ENCODE measurements at regions of chr18 and their contacts with region 1.

Region 1: GRCh38 chr18:45910405-45911023 is 56.6 kb downstream of the EPG5 start:
- DNase-seq: peak; percentile 26
- H3K4me3 ChIP-seq: no peak overlapping the region
- H3K27ac ChIP-seq: no peak overlapping the region
- H3K27me3 ChIP-seq: no peaks in the 10 kb centered on the region
- CTCF ChIP-seq: peak; percentile 94

Region 2: DNA sequence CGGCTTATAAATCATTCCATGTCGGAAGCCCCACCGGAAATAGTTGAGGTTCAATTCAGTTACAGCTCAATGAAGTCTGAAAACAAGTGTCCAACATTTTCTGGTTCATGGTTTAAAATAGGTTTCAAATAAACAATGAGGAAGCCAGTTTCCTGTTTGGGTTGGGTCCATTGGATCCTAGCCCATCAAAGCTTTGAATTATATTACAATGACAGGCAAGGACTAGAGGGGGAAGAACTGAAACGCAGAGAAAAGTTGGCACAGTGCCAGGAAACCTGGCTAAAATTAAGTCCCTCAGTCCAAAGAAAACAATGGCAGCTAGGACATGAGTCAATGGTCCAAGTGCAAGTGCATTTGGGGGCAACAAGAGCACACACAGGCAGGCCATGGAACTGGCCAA is 154.6 kb before region 1 on chr18:
- in situ Hi-C with region 1: no loop called
- DNase-seq: peak; percentile 63
- H3K4me3 ChIP-seq: no peak overlapping the region
- H3K27ac ChIP-seq: no peak overlapping the region
- H3K27me3 ChIP-seq: no peaks in the 10 kb centered on the region
- CTCF ChIP-seq: no peak

Region 3: DNA sequence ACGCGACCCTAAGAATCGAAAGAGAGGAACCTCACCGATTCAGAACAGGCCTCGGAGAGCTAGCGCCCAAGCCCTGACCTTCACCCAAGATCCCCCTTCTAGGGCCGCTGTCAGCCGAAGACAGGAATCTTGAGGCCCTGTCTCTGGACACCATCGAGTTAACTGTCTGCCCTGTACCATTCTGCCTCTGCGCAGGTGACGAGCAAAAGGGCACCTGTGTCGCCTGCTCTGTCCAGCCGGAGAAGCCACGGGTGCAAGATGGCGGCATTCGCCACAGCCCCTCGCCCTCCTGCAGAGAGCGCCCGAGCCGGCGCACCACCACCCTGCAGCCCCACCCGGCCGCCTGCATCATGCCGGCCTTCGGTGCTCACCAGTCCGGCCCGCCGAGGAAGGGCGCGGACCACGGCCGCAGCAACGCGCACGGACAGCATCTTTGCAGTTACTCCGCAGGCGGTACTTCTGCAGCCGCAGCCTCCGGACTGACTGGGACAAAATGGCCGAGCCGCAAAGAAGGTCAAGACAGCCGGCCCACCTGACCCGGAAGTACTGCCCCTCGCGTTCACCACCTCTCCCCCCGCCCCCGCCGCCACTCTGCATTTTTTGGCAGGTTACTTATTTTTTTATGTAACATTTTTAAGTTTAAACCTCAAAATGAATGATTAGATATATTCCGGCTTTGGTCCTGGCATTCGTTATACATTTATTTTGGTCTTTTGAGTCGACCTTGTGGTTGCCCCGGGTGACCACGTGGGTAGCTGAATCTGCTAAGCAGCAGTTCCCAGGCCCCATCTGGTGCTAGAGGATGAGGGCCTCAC is 187.5 kb after region 1 on chr18 and contains the start of gene ATP5F1A:
- in situ Hi-C with region 1: loop called (anchors 25 kb)
- DNase-seq: peak; percentile 84
- H3K4me3 ChIP-seq: peak within 1 kb of the TSS; percentile 100
- H3K27ac ChIP-seq: peak within 1 kb of the TSS; percentile 88
- H3K27me3 ChIP-seq: no peaks in the 10 kb centered on the region
- CTCF ChIP-seq: no peak